CD8-positive, alpha-beta T cell (primary cell): ENCODE measurements at regions of chrX and their contacts with region 1.

Region 1: GRCh38 chrX:101931488-101932248 is at the start of gene ZMAT1:
- DNase-seq: peak; percentile 83 to 95 (median 93)
- ATAC-seq: peak; percentile 82
- H3K4me3 ChIP-seq: peak within 1 kb of the TSS; percentile 48 to 60
- H3K4me3 Mint-ChIP-seq: peak within 1 kb of the TSS; percentile 88
- H3K27ac ChIP-seq: peak within 1 kb of the TSS; percentile 59 to 82
- H3K27ac Mint-ChIP-seq: peak within 1 kb of the TSS; percentile 96
- H3K4me1 ChIP-seq: peaks cover 7% of the 10 kb centered on the region
- H3K4me1 Mint-ChIP-seq: peaks cover 31% of the 10 kb centered on the region
- H3K27me3 ChIP-seq: no peaks in the 10 kb centered on the region
- H3K27me3 Mint-ChIP-seq: no peaks in the 10 kb centered on the region
- CTCF ChIP-seq: no peak
- total RNA-seq, gene ZMAT1: 15.2 to 15.7 TPM

Region 2: DNA sequence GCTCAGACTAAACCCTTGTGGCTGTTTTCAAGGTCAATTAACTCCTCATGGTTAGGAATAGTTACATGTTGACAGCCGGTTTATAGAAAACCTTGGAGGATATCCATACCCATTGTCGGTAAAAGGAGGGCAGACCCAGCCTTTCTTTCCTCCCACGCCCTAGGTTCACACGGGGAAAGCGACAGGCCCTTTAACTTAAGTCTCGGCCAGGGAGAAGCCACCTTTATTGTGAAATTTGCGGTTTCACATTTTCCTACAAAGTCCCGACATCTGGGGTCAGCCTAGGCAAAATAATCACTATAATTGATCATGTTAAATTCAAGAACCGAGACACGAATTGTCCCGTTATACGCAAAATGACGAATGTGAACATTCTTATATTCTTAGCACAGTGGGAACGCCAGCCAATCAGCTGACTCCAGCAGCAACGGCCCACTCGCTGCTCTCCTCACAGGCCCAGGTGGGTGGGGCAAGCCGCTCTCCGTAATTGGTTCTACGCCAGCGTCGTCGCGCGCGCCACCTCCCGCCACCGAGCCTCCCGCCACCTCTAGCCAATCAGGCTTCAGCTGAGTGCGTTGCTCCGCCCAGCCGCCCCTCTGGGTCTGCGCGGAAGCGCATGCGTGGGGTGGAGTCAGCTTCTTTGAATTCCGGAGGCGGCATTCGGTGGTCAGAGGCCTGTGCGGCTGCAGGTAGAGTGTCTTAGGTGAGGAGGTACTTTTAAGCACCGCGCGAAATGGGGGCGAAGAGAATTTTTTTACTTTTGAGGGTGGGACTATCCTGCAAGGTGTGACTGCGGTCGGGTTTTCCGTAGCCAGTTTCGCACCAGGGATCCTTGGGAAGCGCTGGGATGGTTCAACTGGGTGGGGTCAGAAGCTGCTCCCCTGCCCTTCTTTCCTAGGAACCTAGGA is 833.9 kb before region 1 on chrX and contains the start of gene CENPI:
- CTCF ChIA-PET with region 1: no interaction called
- POLR2A ChIA-PET with region 1: no interaction called
- intact Hi-C with region 1: loop called (anchors 5 kb)
- DNase-seq: peak; percentile 83 to 95 (median 90)
- ATAC-seq: peak; percentile 99
- H3K4me3 ChIP-seq: peak within 1 kb of the TSS; percentile 50 to 69
- H3K4me3 Mint-ChIP-seq: peak within 1 kb of the TSS; percentile 91
- H3K27ac ChIP-seq: peak within 1 kb of the TSS; percentile 80 to 88
- H3K27ac Mint-ChIP-seq: peak within 1 kb of the TSS; percentile 96
- H3K4me1 ChIP-seq: peaks cover 10% of the 10 kb centered on the region
- H3K4me1 Mint-ChIP-seq: peaks cover 13% of the 10 kb centered on the region
- H3K27me3 ChIP-seq: no peaks in the 10 kb centered on the region
- H3K27me3 Mint-ChIP-seq: no peaks in the 10 kb centered on the region
- CTCF ChIP-seq: no peak
- total RNA-seq, gene CENPI: 0.35 to 0.44 TPM

Region 3: GRCh38 chrX:101407748-101408531 is 523.7 kb before region 1 on chrX and contains the starts of genes GLA and HNRNPH2:
- CTCF ChIA-PET with region 1: no interaction called
- POLR2A ChIA-PET with region 1: no interaction called
- intact Hi-C with region 1: loop called (anchors 2 to 5 kb)
- DNase-seq: peak; percentile 74 to 98 (median 85)
- ATAC-seq: peak; percentile 88
- H3K4me3 ChIP-seq: peak within 1 kb of the TSS; percentile 88 to 91
- H3K4me3 Mint-ChIP-seq: peak within 1 kb of the TSS; percentile 93
- H3K27ac ChIP-seq: peak within 1 kb of the TSS; percentile 98 to 99
- H3K27ac Mint-ChIP-seq: peak within 1 kb of the TSS; percentile 99
- H3K4me1 ChIP-seq: peaks cover 24% of the 10 kb centered on the region
- H3K4me1 Mint-ChIP-seq: peaks cover 37% of the 10 kb centered on the region
- H3K27me3 ChIP-seq: no peaks in the 10 kb centered on the region
- H3K27me3 Mint-ChIP-seq: no peaks in the 10 kb centered on the region
- CTCF ChIP-seq: no peak
- total RNA-seq, gene GLA: 31.7 to 32.0 TPM
- total RNA-seq, gene HNRNPH2: 43.2 to 47.3 TPM

Region 4: DNA sequence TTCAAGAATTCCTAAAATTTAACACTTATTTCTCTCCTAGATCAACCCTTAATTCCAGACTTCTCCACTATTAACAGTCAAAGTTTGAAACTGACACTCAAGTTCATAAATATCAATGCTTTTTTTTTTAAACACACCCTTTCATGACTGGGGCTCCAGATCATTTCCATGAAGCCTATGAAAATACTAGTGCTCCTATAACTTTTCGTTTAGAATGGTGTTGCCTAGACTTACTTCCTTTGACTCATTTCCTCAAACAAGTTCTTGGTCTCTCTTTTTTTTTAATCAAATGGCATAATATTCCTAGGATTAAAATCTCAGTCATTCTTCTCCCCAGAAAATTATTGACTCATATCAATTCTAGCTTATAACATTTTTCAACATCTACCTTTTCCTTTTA is 12.9 kb before region 1 on chrX:
- CTCF ChIA-PET with region 1: no interaction called
- POLR2A ChIA-PET with region 1: interaction called, 14 read pairs
- intact Hi-C with region 1: no loop called
- DNase-seq: no peak
- ATAC-seq: no peak
- H3K4me3 ChIP-seq: no peak overlapping the region
- H3K4me3 Mint-ChIP-seq: no peak overlapping the region
- H3K27ac ChIP-seq: no peak overlapping the region
- H3K27ac Mint-ChIP-seq: no peak overlapping the region
- H3K4me1 ChIP-seq: no peaks in the 10 kb centered on the region
- H3K4me1 Mint-ChIP-seq: peaks cover 8% of the 10 kb centered on the region
- H3K27me3 ChIP-seq: no peaks in the 10 kb centered on the region
- H3K27me3 Mint-ChIP-seq: no peaks in the 10 kb centered on the region
- CTCF ChIP-seq: no peak

Region 5: GRCh38 chrX:103686199-103687072 is 1754.8 kb after region 1 on chrX and contains the start of gene MORF4L2:
- CTCF ChIA-PET with region 1: no interaction called
- POLR2A ChIA-PET with region 1: interaction called, 5 read pairs
- intact Hi-C with region 1: loop called in 1 of 2 experiments (anchors 5 kb)
- DNase-seq: peak; percentile 69 to 96 (median 84)
- ATAC-seq: peak; percentile 81
- H3K4me3 ChIP-seq: peak within 1 kb of the TSS; percentile 88 to 90
- H3K4me3 Mint-ChIP-seq: peak within 1 kb of the TSS; percentile 80
- H3K27ac ChIP-seq: peak within 1 kb of the TSS; percentile 99 to 100
- H3K27ac Mint-ChIP-seq: peak within 1 kb of the TSS; percentile 76
- H3K4me1 ChIP-seq: peaks cover 18% of the 10 kb centered on the region
- H3K4me1 Mint-ChIP-seq: peaks cover 19% of the 10 kb centered on the region
- H3K27me3 ChIP-seq: no peaks in the 10 kb centered on the region
- H3K27me3 Mint-ChIP-seq: no peaks in the 10 kb centered on the region
- CTCF ChIP-seq: no peak
- total RNA-seq, gene MORF4L2: 203 to 204 TPM